PC-9 (cell line): ENCODE measurements at regions of chr17 and their contacts with region 1.

Region 1: DNA sequence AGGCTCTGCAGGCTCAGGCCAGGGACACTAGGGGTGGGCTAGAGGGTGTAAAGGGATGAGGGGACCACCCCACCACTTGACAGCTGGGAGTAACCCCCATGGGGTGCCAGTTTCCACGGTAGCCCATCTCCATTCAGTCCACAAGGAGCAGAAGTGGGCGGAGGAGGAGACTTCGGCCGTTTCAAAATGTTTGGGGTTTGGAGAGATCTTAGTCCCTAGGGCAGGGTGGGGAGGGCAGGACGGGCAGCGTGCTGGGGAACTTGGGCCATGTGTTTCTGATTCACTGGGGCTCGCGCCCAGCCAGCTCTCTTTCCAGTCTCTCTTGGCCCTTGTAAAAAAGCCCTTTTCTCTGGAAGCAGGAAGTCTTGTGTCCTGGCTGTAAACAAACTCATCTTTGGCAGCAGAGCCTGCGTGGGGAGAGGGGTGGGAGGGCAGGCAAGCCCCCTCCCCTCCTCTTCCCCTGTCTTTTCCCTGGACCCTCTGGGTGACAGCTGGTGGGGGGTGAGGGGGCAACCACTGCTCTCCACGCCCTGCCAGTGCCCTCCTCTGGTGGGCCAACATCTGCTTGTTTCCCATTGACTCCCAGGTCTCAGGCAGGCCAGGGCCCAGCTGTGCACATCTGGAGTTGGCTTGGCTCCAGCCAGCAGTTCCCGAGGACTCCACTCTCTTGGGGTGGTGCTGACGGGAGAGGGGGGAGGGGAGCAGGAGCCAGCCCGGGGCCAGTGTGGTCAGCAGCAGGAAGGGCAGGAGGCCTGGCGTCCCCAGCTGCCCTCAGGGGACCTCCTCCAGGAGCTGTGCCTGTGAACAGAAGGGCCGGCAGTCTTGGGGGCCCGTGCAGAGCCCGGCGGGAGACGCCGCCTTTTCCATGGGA is 8.1 kb downstream of the CYGB start:
- DNase-seq: peak in 1 of 2 experiments; percentile 57
- H3K4me3 ChIP-seq: no peak overlapping the region
- H3K27ac ChIP-seq: peak overlapping the region; percentile 54
- H3K4me1 ChIP-seq: peaks cover 36% of the 10 kb centered on the region
- H3K27me3 ChIP-seq: no peaks in the 10 kb centered on the region
- CTCF ChIP-seq: no peak

Region 2: DNA sequence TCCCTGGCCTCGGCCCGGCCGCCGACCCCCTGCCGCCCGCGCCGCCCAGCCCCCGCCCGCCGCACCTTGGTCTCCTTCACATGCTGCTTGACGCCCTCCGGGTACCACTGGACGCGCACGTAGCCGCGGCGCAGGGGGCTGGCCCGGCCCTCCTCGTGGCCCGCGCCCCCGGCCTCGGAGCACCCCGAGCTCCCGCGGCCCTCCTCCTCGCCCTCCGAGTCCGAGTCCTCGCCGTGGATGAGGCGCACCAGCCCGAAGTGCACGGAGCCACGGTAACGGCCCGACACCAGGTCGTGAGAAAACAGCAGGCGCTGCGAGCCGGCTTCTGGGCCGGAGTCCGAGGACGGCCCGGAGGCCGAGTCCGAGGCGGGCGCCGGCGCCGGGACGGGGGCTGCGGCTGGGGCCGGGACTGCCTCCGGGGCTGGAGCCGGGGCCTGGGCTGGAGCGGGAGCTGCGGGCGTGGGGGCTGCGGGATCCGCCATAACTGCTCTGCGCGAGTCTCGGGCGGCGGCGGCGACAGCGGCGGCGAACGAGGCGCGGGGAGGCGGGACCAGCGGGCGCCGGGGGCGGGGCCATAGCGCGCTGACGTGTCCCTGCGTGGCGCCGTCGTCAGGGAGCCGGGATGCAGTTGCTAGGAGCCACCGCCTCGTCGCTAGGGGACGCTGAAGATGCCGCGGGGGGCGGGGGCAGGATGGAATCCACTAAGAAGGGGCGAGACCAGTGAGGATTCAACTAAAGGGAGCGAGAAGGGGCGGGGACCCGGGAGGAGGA is 76.6 kb before region 1 on chr17 and contains the start of gene UBE2O:
- CTCF ChIA-PET with region 1: interaction called, 19 read pairs
- POLR2A ChIA-PET with region 1: no interaction called
- intact Hi-C with region 1: no loop called
- DNase-seq: peak; percentile 67 to 88
- H3K4me3 ChIP-seq: peak within 1 kb of the TSS; percentile 87
- H3K27ac ChIP-seq: no peak within 1 kb of the TSS
- H3K4me1 ChIP-seq: peaks cover 23% of the 10 kb centered on the region
- H3K27me3 ChIP-seq: no peaks in the 10 kb centered on the region
- CTCF ChIP-seq: no peak
- total RNA-seq, gene UBE2O: 27.4 and 28.0 TPM in 2 replicates

Region 3: GRCh38 chr17:76485569-76485968 is 43.9 kb before region 1 on chr17:
- CTCF ChIA-PET with region 1: no interaction called
- POLR2A ChIA-PET with region 1: interaction called, 10 read pairs
- intact Hi-C with region 1: no loop called
- DNase-seq: no peak
- H3K4me3 ChIP-seq: no peak overlapping the region
- H3K27ac ChIP-seq: no peak overlapping the region
- H3K4me1 ChIP-seq: no peaks in the 10 kb centered on the region; the same call in 1 of the 2 replicates
- H3K27me3 ChIP-seq: no peaks in the 10 kb centered on the region
- CTCF ChIP-seq: no peak

Region 4: DNA sequence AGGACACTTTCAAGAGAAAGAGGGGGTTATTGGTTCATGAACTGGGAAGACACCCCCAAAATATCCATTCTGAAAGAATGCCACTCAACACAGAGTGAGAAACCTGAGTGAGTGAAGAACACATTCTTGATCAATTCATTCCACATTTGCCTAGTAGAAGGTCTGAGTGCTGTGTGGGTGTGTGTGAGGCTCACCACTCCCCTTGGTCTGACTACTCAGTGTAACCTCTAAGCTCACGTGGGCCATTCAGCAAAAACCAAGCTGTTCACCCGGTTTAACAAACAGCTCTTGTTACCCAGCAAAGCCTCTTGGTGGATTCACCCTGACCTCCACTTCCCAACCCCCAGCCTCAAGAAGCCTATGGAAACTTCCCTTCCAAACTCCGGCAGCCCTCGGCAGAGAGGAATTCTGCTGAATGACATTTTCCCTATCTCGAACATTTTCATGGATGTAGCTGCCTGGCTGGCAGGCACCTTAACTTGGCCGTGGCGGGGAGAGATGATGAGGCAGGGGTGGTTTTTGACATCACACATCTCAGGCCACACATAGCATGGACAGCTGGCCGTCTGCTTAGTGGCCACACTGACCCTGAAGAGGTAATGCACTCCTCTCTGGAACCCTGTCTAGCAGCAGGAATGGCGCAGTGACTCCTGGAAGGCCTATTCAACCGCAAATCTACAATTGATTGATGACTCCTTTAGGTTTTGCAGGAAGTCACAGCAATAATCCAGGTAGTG is 102.5 kb after region 1 on chr17:
- CTCF ChIA-PET with region 1: no interaction called
- POLR2A ChIA-PET with region 1: interaction called, 24 read pairs
- intact Hi-C with region 1: no loop called
- DNase-seq: peak; percentile 52 to 60
- H3K4me3 ChIP-seq: no peak overlapping the region
- H3K27ac ChIP-seq: no peak overlapping the region
- H3K4me1 ChIP-seq: no peaks in the 10 kb centered on the region
- H3K27me3 ChIP-seq: no peaks in the 10 kb centered on the region
- CTCF ChIP-seq: no peak

Region 5: DNA sequence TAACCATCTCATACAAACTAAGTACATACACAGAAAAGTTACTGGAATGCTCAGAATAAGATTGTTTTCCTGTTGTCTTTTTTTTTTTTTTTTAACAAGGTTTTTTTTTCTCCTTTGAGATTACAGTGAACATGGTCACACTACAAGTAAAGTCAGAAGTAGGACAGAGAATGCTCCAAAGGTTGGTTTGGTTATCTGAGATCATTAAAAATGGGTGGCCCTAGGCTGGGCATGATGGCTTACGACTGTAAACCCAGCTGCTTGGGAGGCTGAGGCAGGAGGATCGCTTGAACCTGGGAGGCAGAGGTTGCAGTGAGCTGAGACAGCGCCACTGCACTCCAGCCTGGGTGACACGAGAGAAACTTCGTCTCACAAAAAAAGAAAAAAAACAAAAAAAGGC is 121.0 kb after region 1 on chr17:
- CTCF ChIA-PET with region 1: no interaction called
- POLR2A ChIA-PET with region 1: no interaction called
- intact Hi-C with region 1: no loop called
- DNase-seq: no peak
- H3K4me3 ChIP-seq: no peak overlapping the region
- H3K27ac ChIP-seq: no peak overlapping the region
- H3K4me1 ChIP-seq: no peaks in the 10 kb centered on the region
- H3K27me3 ChIP-seq: no peaks in the 10 kb centered on the region
- CTCF ChIP-seq: no peak